ENCODE measurements at regions of chr5 and their contacts with region 1.

Region 1: GRCh38 chr5:59126708-59127573 is 544.1 kb downstream of the RAB3C start:
- DNase-seq: no peak
- ATAC-seq: peak; percentile 26
- H3K4me3 ChIP-seq: peak overlapping the region; percentile 56; the same call in 1 of the 2 replicates
- H3K27ac ChIP-seq: peak overlapping the region; percentile 69
- H3K4me1 ChIP-seq: peaks cover 20% of the 10 kb centered on the region
- H3K27me3 ChIP-seq: no peaks in the 10 kb centered on the region
- CTCF ChIP-seq: no peak

Region 2: GRCh38 chr5:57360871-57361270 is 1766.1 kb before region 1 on chr5:
- CTCF ChIA-PET with region 1: no interaction called
- POLR2A ChIA-PET with region 1: no interaction called
- intact Hi-C with region 1: loop called (anchors 5 kb)
- DNase-seq: no peak
- ATAC-seq: no peak
- H3K4me3 ChIP-seq: no peak overlapping the region
- H3K27ac ChIP-seq: no peak overlapping the region
- H3K4me1 ChIP-seq: peaks cover 6% of the 10 kb centered on the region
- H3K27me3 ChIP-seq: no peaks in the 10 kb centered on the region
- CTCF ChIP-seq: no peak

Measured in PC-3 (cell line).